MCF 10A (cell line): ENCODE measurements at regions of chr11 and their contacts with region 1.

Region 1: GRCh38 chr11:58524232-58525036 is 16.5 kb upstream of the OR5B21 start:
- DNase-seq: peak; percentile 78
- H3K4me3 Mint-ChIP-seq: no peak overlapping the region
- H3K27ac Mint-ChIP-seq: no peak overlapping the region
- H3K4me1 Mint-ChIP-seq: peaks cover 5% of the 10 kb centered on the region
- H3K27me3 Mint-ChIP-seq: peaks cover 5% of the 10 kb centered on the region
- CTCF ChIP-seq: peak; percentile 83

Region 2: GRCh38 chr11:58549644-58550043 is 25.2 kb after region 1 on chr11:
- CTCF ChIA-PET with region 1: interaction called, 19 read pairs
- POLR2A ChIA-PET with region 1: no interaction called
- intact Hi-C with region 1: no loop called
- DNase-seq: no peak
- H3K4me3 Mint-ChIP-seq: no peak overlapping the region
- H3K27ac Mint-ChIP-seq: no peak overlapping the region
- H3K4me1 Mint-ChIP-seq: no peaks in the 10 kb centered on the region
- H3K27me3 Mint-ChIP-seq: no peaks in the 10 kb centered on the region
- CTCF ChIP-seq: no peak

Region 3: GRCh38 chr11:58567889-58568512 is 43.6 kb after region 1 on chr11:
- CTCF ChIA-PET with region 1: interaction called, 16 read pairs
- POLR2A ChIA-PET with region 1: no interaction called
- intact Hi-C with region 1: no loop called
- DNase-seq: peak; percentile 70
- H3K4me3 Mint-ChIP-seq: no peak overlapping the region
- H3K27ac Mint-ChIP-seq: no peak overlapping the region
- H3K4me1 Mint-ChIP-seq: peaks cover 9% of the 10 kb centered on the region
- H3K27me3 Mint-ChIP-seq: no peaks in the 10 kb centered on the region
- CTCF ChIP-seq: peak; percentile 65